ENCODE measurements at regions of chr4 and their contacts with region 1.

Region 1: DNA sequence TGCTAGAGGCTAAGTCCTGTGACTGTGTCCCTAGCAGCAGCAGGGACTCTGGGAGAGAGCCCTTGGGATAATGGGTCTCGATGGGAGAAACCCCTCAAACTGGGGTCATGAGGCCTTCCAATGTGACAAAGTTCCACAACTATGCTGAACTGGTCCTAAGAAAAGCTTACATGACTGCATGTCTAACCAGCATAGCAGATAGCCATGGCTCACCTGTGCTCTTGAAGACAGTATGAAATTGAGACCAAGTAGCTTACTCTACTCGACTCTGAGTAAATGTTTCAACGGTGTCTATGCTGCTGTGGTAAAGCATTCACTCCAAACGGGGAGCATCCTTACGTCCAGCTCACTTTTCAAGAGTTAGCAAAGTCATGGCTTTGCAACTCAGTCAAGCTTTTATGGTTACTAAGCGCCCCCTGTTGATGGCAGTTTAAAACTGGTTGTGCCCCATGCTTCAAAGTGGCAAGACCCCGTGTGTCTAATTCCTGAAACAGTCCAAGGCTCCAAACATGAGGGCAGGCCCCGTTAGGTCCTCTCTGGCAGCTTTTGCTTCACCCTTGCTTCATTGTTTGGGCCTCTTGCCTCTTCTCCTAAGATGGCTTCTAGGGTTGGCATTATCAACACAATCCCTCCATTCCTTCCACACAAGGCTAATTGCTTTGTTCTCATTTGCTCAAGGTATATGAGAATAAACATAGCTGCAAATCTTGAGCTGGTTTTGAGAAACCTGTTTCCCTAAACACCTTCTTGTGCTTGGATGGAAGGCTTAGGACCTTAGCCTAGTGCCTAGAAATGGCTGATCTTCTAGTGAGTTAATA is 46.6 kb downstream of the CCNG2 start:
- DNase-seq: peak; percentile 59 to 72
- H3K4me3 ChIP-seq: no peak overlapping the region
- H3K27ac ChIP-seq: no peak overlapping the region
- H3K4me1 ChIP-seq: peaks cover 0 to 4% (median 0%) of the 10 kb centered on the region in 4 experiments; a peak in 1 of 7 replicates
- H3K27me3 ChIP-seq: peaks cover 0 to 2% (median 0%) of the 10 kb centered on the region in 4 experiments; a peak in 1 of 7 replicates
- CTCF ChIP-seq: peak; percentile 35 to 93 (median 88)
- EP300 ChIP-seq: no peak
- POLR2A ChIP-seq: no peak
- RAD21 ChIP-seq: peak; percentile 96 to 98

Region 2: DNA sequence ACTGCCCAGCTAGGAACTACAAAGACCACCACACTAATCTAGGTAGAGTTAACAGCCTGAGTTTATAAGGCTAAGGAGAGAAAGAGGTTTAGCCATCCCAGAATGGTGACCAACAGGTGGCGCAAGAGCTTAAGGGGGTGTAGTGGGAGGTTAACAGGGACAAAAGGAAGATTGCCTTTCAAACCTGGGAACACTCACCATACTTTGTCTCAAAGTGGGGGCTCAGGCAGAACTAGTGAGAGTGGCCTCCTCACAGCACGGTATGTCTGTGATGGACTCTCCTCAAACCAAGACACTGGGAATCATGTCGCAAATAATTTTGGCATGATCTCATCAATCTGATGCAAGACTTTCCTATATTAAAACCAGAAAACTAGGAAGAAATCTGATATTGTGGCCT is 151.2 kb before region 1 on chr4:
- CTCF ChIA-PET with region 1: interaction called, 258 read pairs
- POLR2A ChIA-PET with region 1: interaction called, 4 read pairs
- DNase-seq: peak in 1 of 2 experiments; percentile 89
- H3K4me3 ChIP-seq: no peak overlapping the region
- H3K27ac ChIP-seq: 0 out of 2 replicates have a peak overlapping the region, but pooled peaks have one; percentile 37
- H3K4me1 ChIP-seq: no peaks in the 10 kb centered on the region; a peak in 1 of 7 replicates
- H3K27me3 ChIP-seq: no peaks in the 10 kb centered on the region
- CTCF ChIP-seq: peak; percentile 61 to 92 (median 81)
- EP300 ChIP-seq: no peak
- POLR2A ChIP-seq: no peak
- RAD21 ChIP-seq: peak; percentile 76 to 82

Region 3: DNA sequence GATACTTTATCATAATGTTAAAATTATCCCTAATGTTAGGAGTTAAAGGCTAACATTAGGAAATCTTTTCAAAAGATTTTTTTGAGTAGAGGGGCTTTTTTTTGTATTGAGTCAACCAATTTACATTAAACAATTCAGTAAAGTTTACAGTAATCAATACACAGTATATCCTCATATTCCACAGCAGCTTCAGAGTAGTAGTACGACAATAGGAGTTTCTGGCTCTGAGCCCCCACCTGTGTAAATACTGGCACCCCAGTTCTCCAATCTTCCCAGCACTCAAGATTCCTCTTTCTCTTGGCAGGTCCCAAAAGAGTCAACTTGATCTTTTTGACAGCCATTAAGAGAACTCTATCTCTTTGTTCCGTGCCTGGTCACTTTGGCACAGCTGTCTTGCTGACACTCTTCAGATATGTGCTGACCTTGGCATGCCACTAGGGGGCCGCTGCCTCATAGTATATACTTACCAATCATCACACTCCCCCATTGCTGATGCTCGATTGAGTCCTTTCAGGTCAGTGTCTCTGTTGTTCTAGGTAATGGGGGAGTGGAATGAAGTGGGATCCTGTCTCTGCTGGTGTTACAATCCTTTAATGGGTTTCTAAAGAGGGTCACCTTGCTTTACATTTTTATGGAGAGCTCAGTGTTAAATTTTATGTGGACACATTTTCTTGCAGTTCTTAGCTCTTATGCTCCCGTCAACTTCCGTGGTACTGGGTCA is 108.3 kb before region 1 on chr4:
- CTCF ChIA-PET with region 1: interaction called, 63 read pairs
- POLR2A ChIA-PET with region 1: no interaction called
- DNase-seq: peak; percentile 38 to 79
- H3K4me3 ChIP-seq: no peak overlapping the region
- H3K27ac ChIP-seq: no peak overlapping the region
- H3K4me1 ChIP-seq: no peaks in the 10 kb centered on the region
- H3K27me3 ChIP-seq: no peaks in the 10 kb centered on the region
- CTCF ChIP-seq: peak; percentile 70 to 94 (median 76)
- EP300 ChIP-seq: no peak
- POLR2A ChIP-seq: no peak
- RAD21 ChIP-seq: peak; percentile 75 to 80

Region 4: DNA sequence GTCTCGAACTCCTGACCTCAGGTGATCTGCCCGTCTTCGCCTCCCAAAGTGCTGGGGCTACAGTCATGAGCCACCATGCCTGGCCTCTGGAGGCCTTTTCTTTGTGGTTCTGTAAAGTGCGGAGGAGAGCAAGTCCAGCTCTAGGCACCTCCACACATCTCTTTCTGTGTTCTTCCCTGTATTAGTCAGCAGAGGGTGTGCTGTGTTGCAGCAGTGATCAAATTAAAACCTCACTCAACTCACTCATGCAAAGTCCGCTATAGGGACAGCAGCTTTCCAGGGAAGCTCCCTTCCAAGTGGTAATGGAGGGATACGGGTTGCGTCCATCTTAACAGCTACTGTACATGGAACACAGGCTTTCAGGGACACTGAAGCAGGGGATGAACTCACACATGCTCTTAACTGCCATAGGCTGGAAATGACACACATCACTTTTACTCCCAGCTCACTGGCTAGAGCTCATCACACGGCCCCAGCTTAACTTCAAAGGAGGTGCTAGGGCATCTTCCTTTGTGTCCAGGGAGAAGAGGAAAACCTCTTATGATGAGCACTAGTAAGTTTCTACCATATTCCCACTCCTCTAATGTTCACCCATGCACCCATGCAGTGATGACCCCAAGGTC is 82.6 kb before region 1 on chr4:
- CTCF ChIA-PET with region 1: interaction called, 17 read pairs
- POLR2A ChIA-PET with region 1: no interaction called
- DNase-seq: no peak
- H3K4me3 ChIP-seq: no peak overlapping the region
- H3K27ac ChIP-seq: no peak overlapping the region
- H3K4me1 ChIP-seq: no peaks in the 10 kb centered on the region; a peak in 1 of 7 replicates
- H3K27me3 ChIP-seq: no peaks in the 10 kb centered on the region
- CTCF ChIP-seq: peak in 2 of 3 experiments; percentile 34 to 41; a peak in 2 of 4 replicates
- EP300 ChIP-seq: no peak
- POLR2A ChIP-seq: no peak
- RAD21 ChIP-seq: peak; percentile 29 to 52; a peak in 3 of 4 replicates

Region 5: GRCh38 chr4:77163636-77164035 is 40.0 kb before region 1 on chr4:
- CTCF ChIA-PET with region 1: interaction called, 10 read pairs
- POLR2A ChIA-PET with region 1: interaction called, 3 read pairs
- DNase-seq: no peak
- H3K4me3 ChIP-seq: no peak overlapping the region
- H3K27ac ChIP-seq: no peak overlapping the region
- H3K4me1 ChIP-seq: no peaks in the 10 kb centered on the region; a peak in 1 of 7 replicates
- H3K27me3 ChIP-seq: no peaks in the 10 kb centered on the region
- CTCF ChIP-seq: no peak
- EP300 ChIP-seq: no peak
- POLR2A ChIP-seq: no peak
- RAD21 ChIP-seq: no peak

Region 6: DNA sequence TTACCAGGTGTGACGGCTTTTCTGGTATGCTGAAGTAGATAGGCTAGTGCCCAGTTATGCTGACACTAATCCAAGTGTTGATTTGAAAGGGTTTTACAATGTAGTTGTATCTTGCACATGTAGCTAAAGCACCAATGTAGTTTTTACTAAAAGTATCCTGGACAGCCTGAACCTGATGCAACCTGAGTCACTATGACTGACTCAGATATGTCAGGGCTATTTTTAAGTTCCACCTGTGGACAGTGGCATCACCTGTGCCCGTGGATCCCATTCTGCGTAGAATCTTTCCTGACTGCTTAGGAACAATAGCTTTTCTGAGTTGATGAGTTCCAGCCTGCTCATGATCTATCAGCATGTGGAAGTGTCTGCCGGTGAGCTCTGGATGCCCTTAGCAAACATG is 11.5 kb after region 1 on chr4:
- CTCF ChIA-PET with region 1: interaction called, 18 read pairs
- POLR2A ChIA-PET with region 1: interaction called, 5 read pairs
- DNase-seq: no peak
- H3K4me3 ChIP-seq: no peak overlapping the region
- H3K27ac ChIP-seq: no peak overlapping the region
- H3K4me1 ChIP-seq: no peaks in the 10 kb centered on the region
- H3K27me3 ChIP-seq: no peaks in the 10 kb centered on the region; a peak in 1 of 7 replicates
- CTCF ChIP-seq: no peak
- EP300 ChIP-seq: no peak
- POLR2A ChIP-seq: no peak
- RAD21 ChIP-seq: no peak

Region 7: DNA sequence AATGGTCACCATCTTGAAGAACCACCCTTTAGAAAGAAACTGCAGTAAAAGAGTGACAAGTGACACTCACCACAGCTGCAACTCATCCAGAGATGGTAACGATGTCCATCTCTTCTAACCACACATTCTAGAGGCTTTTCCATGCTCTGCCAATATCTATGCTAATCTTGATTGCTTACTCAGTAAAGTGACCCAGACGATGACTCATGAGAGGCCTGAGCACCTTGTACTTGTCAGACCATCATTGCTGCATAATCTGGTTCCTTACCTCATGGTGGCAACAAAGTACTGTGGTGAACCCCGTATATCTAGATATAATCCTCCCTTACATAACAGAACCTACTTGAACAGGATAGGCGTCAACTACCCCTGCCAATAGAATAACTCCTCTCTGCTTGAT is 29.1 kb after region 1 on chr4:
- CTCF ChIA-PET with region 1: interaction called, 23 read pairs
- POLR2A ChIA-PET with region 1: no interaction called
- DNase-seq: no peak
- H3K4me3 ChIP-seq: no peak overlapping the region
- H3K27ac ChIP-seq: no peak overlapping the region
- H3K4me1 ChIP-seq: no peaks in the 10 kb centered on the region
- H3K27me3 ChIP-seq: no peaks in the 10 kb centered on the region
- CTCF ChIP-seq: no peak
- EP300 ChIP-seq: no peak
- POLR2A ChIP-seq: no peak
- RAD21 ChIP-seq: no peak

Measured in H1 (cell line).